Heart right ventricle (tissue), 16 donors: ENCODE measurements at regions of chr2 and their contacts with region 1.

Region 1: DNA sequence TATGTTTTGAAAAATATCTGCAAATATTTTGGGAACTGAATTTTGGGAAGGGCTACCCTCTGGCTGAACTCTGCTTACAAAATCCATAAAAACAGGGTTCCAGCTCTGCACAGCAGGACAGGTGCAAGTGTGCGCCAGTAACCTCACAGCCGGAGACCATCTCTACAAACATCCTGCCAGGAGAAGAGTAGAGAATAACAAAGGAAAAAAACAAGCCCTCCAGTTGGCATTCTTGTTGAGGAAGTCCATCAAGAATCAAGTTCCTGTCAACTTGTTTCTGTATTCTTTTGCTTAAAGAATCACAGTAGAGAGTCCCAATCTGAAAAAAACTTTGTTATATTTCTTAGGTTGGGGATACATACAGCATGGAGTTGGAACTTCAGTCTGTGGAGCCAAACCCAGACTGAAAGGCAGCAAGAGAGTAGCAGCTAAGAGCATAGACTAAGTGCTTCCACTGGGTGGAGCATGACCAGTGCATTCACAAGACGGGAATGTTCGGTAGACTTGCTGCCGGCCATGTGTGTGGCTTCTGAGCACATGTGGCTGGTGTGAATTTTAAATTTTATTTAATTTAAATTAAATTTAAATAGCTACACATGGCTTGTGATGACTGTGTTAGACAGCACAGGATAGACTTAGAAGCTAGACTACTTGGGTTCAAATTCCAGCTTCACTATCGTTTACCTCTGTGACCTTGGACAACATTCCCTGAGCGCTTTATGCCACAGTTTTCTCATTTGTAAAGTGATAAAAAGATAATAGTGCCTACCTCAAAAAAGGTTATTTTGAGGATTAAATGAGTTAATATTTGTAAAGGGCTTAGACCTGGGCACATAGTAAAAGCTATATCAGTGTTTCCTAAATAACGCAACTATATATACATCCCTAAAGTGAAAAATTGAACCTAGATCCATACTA is 41.9 kb downstream of the SPTBN1 start:
- DNase-seq: peak in 1 of 2 donors; percentile 44
- ATAC-seq: peak; percentile 45 to 71 (median 56)
- H3K4me3 ChIP-seq: no peak overlapping the region
- H3K27ac ChIP-seq: peak overlapping the region in 8 of 10 donors; percentile 5 to 72 (median 24)
- H3K4me1 ChIP-seq: peaks cover 35 to 100% (median 96%) of the 10 kb centered on the region in 9 donors
- H3K27me3 ChIP-seq: no peaks in the 10 kb centered on the region
- CTCF ChIP-seq: peak in 8 of 9 donors; percentile 30 to 63 (median 52)

Region 2: GRCh38 chr2:54461261-54461660 is 36.8 kb before region 1 on chr2:
- intact Hi-C with region 1: loop called in 3 of 10 experiments (anchors 5 kb)
- DNase-seq: no peak
- ATAC-seq: peak in 5 of 8 donors; percentile 11 to 50 (median 41)
- H3K4me3 ChIP-seq: peak overlapping the region in 2 of 10 donors; percentile 0 to 79
- H3K27ac ChIP-seq: peak overlapping the region in 9 of 10 donors; percentile 30 to 98 (median 75)
- H3K4me1 ChIP-seq: peaks cover 12 to 85% (median 72%) of the 10 kb centered on the region in 9 donors
- H3K27me3 ChIP-seq: peaks cover 0 to 30% (median 0%) of the 10 kb centered on the region in 7 donors
- CTCF ChIP-seq: no peak